Activated CD4-positive, alpha-beta T cell treated with anti-CD3 and anti-CD28 coated beads for 36 hours (primary cell): ENCODE measurements at regions of chr1 and their contacts with region 1.

Region 1: DNA sequence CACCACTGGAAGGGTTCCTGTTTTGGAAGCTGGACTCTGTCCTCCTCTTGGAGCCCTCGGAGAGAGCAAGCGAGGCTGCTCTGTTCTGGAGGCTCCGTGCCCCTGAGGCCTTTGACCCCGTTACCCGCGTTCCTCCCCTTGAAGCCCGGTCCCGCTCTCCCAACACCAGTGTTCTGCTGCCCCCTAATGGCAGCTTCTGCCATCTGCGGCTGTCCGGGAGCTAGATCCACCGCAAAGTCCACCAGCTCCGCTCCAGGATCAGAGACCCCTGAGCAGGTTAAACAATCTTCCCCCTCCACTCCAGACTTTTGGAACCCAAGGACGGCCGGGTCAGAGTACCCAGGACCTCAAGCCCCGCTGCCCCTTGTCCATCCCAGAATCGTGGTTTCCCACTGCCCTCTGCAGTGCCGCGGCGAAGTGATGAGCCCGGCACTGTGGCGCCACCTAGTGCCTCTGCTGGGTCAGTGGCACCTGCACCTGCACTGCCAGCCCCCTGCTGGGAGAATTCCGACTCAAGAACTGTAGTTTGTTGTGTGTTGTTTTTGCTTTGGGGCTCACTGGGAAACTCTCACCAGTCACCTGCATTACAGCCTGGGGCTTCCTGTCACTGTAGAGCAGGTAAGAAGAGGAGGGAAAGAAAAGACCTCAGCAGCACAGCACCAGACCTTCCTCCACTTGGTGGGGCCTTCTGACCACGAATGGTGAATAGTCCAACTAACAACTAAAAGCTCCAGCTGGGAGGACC is 63.5 kb upstream of the NFASC start:
- DNase-seq: peak; percentile 92
- ATAC-seq: peak; percentile 96
- H3K4me3 Mint-ChIP-seq: peak overlapping the region; percentile 74
- H3K27ac Mint-ChIP-seq: peak overlapping the region; percentile 86
- H3K4me1 Mint-ChIP-seq: peaks cover 5% of the 10 kb centered on the region
- H3K27me3 Mint-ChIP-seq: no peaks in the 10 kb centered on the region

Region 2: GRCh38 chr1:204431310-204432165 is 375.6 kb before region 1 on chr1:
- CTCF ChIA-PET with region 1: interaction called, 7 read pairs
- POLR2A ChIA-PET with region 1: no interaction called
- intact Hi-C with region 1: loop called (anchors 1 to 5 kb)
- DNase-seq: peak; percentile 91
- ATAC-seq: peak; percentile 85
- H3K4me3 Mint-ChIP-seq: no peak overlapping the region
- H3K27ac Mint-ChIP-seq: peak overlapping the region; percentile 45
- H3K4me1 Mint-ChIP-seq: peaks cover 10% of the 10 kb centered on the region
- H3K27me3 Mint-ChIP-seq: no peaks in the 10 kb centered on the region

Region 3: DNA sequence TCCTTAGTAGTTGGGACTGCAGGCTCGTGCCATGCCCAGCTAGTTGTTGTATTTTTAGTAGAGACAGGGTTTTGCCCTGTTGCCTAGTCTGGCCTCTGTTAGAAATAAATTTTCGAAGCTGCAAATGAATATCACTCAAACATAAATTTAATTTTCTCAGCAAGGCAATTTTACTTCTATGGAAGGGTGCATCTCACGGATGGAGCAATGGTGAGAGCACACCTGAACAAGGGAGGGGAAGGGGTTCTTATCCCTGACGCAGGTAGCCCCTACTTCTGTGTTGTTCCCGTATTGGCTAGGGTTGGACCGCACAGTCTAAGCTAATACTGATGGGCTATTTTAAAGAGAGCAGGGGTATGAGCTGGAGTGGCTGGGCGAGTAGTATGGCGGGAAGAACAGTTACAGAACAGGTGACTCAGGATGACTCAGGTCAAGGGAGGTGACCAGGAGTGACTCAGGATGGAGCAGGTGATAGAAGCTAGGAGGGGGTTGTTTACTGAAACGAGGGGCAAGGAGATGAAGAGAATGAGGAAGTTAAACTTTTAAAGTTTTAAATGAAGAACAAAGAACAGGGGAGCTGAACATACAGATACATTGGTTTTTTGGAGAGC is 283.4 kb before region 1 on chr1:
- CTCF ChIA-PET with region 1: interaction called, 14 read pairs
- POLR2A ChIA-PET with region 1: no interaction called
- intact Hi-C with region 1: no loop called
- DNase-seq: peak; percentile 47
- ATAC-seq: no peak
- H3K4me3 Mint-ChIP-seq: no peak overlapping the region
- H3K27ac Mint-ChIP-seq: peak overlapping the region; percentile 88
- H3K4me1 Mint-ChIP-seq: peaks cover 56% of the 10 kb centered on the region
- H3K27me3 Mint-ChIP-seq: no peaks in the 10 kb centered on the region

Region 4: DNA sequence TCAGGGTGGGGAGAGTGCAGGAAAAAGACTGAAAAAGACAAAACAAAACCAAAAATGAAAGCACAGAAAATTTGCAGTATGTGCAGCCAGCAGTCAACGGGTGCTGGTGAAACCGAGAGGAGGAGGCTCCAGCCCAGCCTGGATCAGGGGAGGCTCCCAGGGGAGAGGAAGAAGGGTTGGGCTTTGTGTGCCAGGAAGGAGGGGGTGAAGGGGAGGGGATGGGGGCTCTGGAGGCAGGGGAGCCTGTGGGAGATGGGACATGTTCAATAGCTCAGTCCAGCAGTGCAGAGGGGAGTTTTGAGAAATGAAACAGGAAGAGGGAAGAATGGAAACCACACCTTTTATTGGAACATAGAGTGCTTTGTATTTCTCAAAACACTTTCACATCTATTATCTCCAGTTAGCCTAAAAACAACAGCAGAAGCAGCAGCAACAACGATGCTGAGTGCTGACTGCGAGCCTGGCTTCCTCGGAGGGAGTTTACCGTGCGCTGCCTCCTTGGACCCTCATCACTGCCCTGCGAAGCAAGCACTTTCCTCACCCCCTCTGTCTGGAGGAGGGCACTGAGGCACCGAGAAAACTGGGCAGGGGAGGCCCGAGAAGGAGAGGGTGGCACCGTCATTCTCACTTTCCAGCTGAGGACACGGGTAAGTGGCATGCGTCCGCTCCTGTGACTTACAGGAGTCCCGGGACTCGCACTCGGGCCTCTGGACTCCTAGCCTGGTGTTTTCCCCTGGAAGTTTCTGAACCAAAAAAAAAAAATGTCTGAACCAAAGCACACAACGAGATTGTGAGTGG is 228.0 kb before region 1 on chr1:
- CTCF ChIA-PET with region 1: interaction called, 16 read pairs
- POLR2A ChIA-PET with region 1: no interaction called
- intact Hi-C with region 1: no loop called
- DNase-seq: peak; percentile 67
- ATAC-seq: peak; percentile 91
- H3K4me3 Mint-ChIP-seq: peak overlapping the region; percentile 31
- H3K27ac Mint-ChIP-seq: peak overlapping the region; percentile 72
- H3K4me1 Mint-ChIP-seq: peaks cover 20% of the 10 kb centered on the region
- H3K27me3 Mint-ChIP-seq: no peaks in the 10 kb centered on the region

Region 5: GRCh38 chr1:204692325-204692840 is 114.7 kb before region 1 on chr1:
- CTCF ChIA-PET with region 1: interaction called, 11 read pairs
- POLR2A ChIA-PET with region 1: no interaction called
- intact Hi-C with region 1: no loop called
- DNase-seq: no peak
- ATAC-seq: no peak
- H3K4me3 Mint-ChIP-seq: no peak overlapping the region
- H3K27ac Mint-ChIP-seq: no peak overlapping the region
- H3K4me1 Mint-ChIP-seq: peaks cover 5% of the 10 kb centered on the region
- H3K27me3 Mint-ChIP-seq: peaks cover 5% of the 10 kb centered on the region

Region 6: DNA sequence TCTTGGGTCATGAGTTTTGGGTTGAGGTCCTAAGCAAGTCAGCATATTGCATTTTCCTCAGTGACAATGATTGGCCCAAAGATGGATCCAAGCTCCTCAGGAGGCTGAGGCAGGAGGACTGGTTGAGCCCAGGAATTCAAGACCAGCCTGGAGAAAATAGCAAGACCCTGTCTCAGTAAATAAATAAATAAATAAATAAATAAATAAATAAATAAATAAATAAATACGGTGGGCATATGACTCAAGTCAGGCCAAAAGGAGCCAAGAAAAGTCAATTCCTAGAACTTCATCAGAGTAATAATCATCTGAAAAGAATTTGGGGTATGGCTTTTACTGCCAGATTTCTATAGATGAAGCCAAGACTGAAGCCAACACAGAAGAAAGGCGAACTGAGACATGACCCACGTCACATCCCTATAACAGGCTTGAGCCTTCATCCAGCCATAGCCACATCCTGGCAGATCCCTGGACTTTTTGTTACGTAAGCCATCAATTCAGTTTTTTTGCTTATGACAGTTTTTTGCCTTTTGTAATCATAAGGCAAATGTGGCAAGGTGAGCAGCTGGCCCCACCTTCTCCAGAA is 24.9 kb before region 1 on chr1:
- CTCF ChIA-PET with region 1: interaction called, 206 read pairs
- POLR2A ChIA-PET with region 1: no interaction called
- intact Hi-C with region 1: no loop called
- DNase-seq: no peak
- ATAC-seq: no peak
- H3K4me3 Mint-ChIP-seq: no peak overlapping the region
- H3K27ac Mint-ChIP-seq: no peak overlapping the region
- H3K4me1 Mint-ChIP-seq: no peaks in the 10 kb centered on the region
- H3K27me3 Mint-ChIP-seq: peaks cover 8% of the 10 kb centered on the region

Region 7: GRCh38 chr1:204834336-204834735 is 27.2 kb after region 1 on chr1:
- CTCF ChIA-PET with region 1: interaction called, 15 read pairs
- POLR2A ChIA-PET with region 1: interaction called, 3 read pairs
- intact Hi-C with region 1: no loop called
- DNase-seq: no peak
- ATAC-seq: no peak
- H3K4me3 Mint-ChIP-seq: no peak overlapping the region
- H3K27ac Mint-ChIP-seq: no peak overlapping the region
- H3K4me1 Mint-ChIP-seq: no peaks in the 10 kb centered on the region
- H3K27me3 Mint-ChIP-seq: peaks cover 42% of the 10 kb centered on the region